PC-3 (cell line): ENCODE measurements at regions of chr6 and their contacts with region 1.

Region 1: DNA sequence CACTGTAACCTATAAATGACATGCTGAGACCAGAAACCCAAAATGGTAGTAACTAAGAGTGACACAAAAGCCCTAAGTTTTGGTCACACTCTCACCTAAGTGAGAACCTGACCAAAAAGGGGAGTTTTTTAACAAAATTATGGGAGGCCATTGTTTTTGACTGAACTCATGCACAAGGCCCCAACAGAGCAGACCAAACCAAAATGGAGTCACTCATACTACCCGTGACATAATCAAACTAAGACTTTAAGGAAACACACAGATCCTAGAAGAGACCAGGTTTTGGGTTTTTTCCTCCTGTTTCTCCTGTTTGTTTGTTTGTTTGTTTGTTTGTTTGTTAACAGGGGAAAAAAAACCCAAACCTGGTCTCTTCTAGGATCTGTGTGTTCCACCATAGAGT is 49.2 kb upstream of the MRAP2 start:
- DNase-seq: no peak
- ATAC-seq: no peak
- H3K4me3 ChIP-seq: no peak overlapping the region
- H3K27ac ChIP-seq: no peak overlapping the region
- H3K4me1 ChIP-seq: peaks cover 14% of the 10 kb centered on the region
- H3K27me3 ChIP-seq: no peaks in the 10 kb centered on the region
- CTCF ChIP-seq: no peak

Region 2: GRCh38 chr6:83927470-83927869 is 56.9 kb before region 1 on chr6:
- CTCF ChIA-PET with region 1: no interaction called
- POLR2A ChIA-PET with region 1: no interaction called
- intact Hi-C with region 1: no loop called
- DNase-seq: no peak
- ATAC-seq: no peak
- H3K4me3 ChIP-seq: no peak overlapping the region
- H3K27ac ChIP-seq: no peak overlapping the region
- H3K4me1 ChIP-seq: no peaks in the 10 kb centered on the region
- H3K27me3 ChIP-seq: no peaks in the 10 kb centered on the region
- CTCF ChIP-seq: no peak

Region 3: GRCh38 chr6:84033523-84034451 is 49.4 kb after region 1 on chr6 and contains the start of gene MRAP2:
- CTCF ChIA-PET with region 1: no interaction called
- POLR2A ChIA-PET with region 1: no interaction called
- intact Hi-C with region 1: no loop called
- DNase-seq: no peak
- ATAC-seq: peak; percentile 64
- H3K4me3 ChIP-seq: peak within 1 kb of the TSS; percentile 66
- H3K27ac ChIP-seq: no peak within 1 kb of the TSS
- H3K4me1 ChIP-seq: no peaks in the 10 kb centered on the region
- H3K27me3 ChIP-seq: peaks cover 11% of the 10 kb centered on the region
- CTCF ChIP-seq: no peak
- total RNA-seq, gene MRAP2: 0.07 and 0.12 TPM in 2 replicates

Region 4: GRCh38 chr6:84193114-84193708 is 208.8 kb after region 1 on chr6:
- CTCF ChIA-PET with region 1: no interaction called
- POLR2A ChIA-PET with region 1: no interaction called
- intact Hi-C with region 1: loop called (anchors 5 kb)
- DNase-seq: peak; percentile 78
- ATAC-seq: peak; percentile 92
- H3K4me3 ChIP-seq: no peak overlapping the region
- H3K27ac ChIP-seq: peak overlapping the region; percentile 79
- H3K4me1 ChIP-seq: peaks cover 24% of the 10 kb centered on the region
- H3K27me3 ChIP-seq: no peaks in the 10 kb centered on the region
- CTCF ChIP-seq: no peak

Region 5: DNA sequence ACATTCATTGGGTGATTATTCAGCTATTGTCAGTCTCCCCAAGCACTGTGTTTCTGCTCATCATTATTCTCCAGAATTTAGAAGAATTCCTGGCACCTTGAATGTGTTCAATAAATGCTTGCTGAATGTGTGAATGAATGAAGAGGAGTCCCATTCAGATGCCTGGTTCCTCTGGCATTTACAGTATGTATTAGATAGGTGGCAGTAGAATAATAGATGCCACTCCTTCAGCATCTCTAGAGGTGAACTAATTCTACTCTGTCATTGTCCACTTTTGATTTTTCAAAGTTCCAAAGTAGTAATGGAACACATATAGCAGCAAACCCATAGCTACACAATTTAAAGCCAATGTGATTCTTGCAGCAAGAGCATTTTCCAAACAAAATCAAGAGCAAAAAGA is 362.0 kb after region 1 on chr6:
- CTCF ChIA-PET with region 1: no interaction called
- POLR2A ChIA-PET with region 1: no interaction called
- intact Hi-C with region 1: no loop called
- DNase-seq: peak; percentile 11
- ATAC-seq: peak; percentile 56
- H3K4me3 ChIP-seq: no peak overlapping the region
- H3K27ac ChIP-seq: no peak overlapping the region
- H3K4me1 ChIP-seq: no peaks in the 10 kb centered on the region
- H3K27me3 ChIP-seq: no peaks in the 10 kb centered on the region
- CTCF ChIP-seq: peak; percentile 59